ENCODE measurements at regions of chr3 and their contacts with region 1.

Region 1: GRCh38 chr3:187164885-187165543 is 25.7 kb upstream of the RPL39L start:
- DNase-seq: no peak
- H3K4me3 ChIP-seq: no peak overlapping the region
- H3K27ac ChIP-seq: no peak overlapping the region
- H3K27me3 ChIP-seq: peaks cover 20% of the 10 kb centered on the region
- CTCF ChIP-seq: peak; percentile 67

Region 2: GRCh38 chr3:186821429-186822367 is 343.3 kb before region 1 on chr3:
- CTCF ChIA-PET with region 1: interaction called, 15 read pairs
- POLR2A ChIA-PET with region 1: no interaction called
- DNase-seq: no peak
- H3K4me3 ChIP-seq: peak overlapping the region; percentile 47
- H3K27ac ChIP-seq: peak overlapping the region; percentile 87
- H3K27me3 ChIP-seq: no peaks in the 10 kb centered on the region
- CTCF ChIP-seq: peak; percentile 73

Region 3: GRCh38 chr3:186849374-186849975 is 315.5 kb before region 1 on chr3:
- CTCF ChIA-PET with region 1: interaction called, 157 read pairs
- POLR2A ChIA-PET with region 1: no interaction called
- DNase-seq: no peak
- H3K4me3 ChIP-seq: no peak overlapping the region
- H3K27ac ChIP-seq: no peak overlapping the region
- H3K27me3 ChIP-seq: peaks cover 27% of the 10 kb centered on the region
- CTCF ChIP-seq: peak; percentile 51

Region 4: GRCh38 chr3:187112934-187113793 is 51.9 kb before region 1 on chr3:
- CTCF ChIA-PET with region 1: interaction called, 99 read pairs
- POLR2A ChIA-PET with region 1: no interaction called
- DNase-seq: no peak
- H3K4me3 ChIP-seq: no peak overlapping the region
- H3K27ac ChIP-seq: no peak overlapping the region
- H3K27me3 ChIP-seq: no peaks in the 10 kb centered on the region
- CTCF ChIP-seq: peak; percentile 61

Region 5: GRCh38 chr3:187139126-187139894 is 25.7 kb before region 1 on chr3 and contains the start of gene RPL39L:
- CTCF ChIA-PET with region 1: interaction called, 62 read pairs
- POLR2A ChIA-PET with region 1: no interaction called
- DNase-seq: peak; percentile 45
- H3K4me3 ChIP-seq: peak within 1 kb of the TSS; percentile 79
- H3K27ac ChIP-seq: peak within 1 kb of the TSS; percentile 57
- H3K27me3 ChIP-seq: peaks cover 9% of the 10 kb centered on the region
- CTCF ChIP-seq: peak; percentile 96
- polyA plus RNA-seq, gene RPL39L: 14.4 and 17.0 TPM in 2 replicates

Region 6: GRCh38 chr3:187210545-187211327 is 45.7 kb after region 1 on chr3:
- CTCF ChIA-PET with region 1: interaction called, 19 read pairs
- POLR2A ChIA-PET with region 1: no interaction called
- DNase-seq: no peak
- H3K4me3 ChIP-seq: no peak overlapping the region
- H3K27ac ChIP-seq: no peak overlapping the region
- H3K27me3 ChIP-seq: no peaks in the 10 kb centered on the region
- CTCF ChIP-seq: no peak

Region 7: DNA sequence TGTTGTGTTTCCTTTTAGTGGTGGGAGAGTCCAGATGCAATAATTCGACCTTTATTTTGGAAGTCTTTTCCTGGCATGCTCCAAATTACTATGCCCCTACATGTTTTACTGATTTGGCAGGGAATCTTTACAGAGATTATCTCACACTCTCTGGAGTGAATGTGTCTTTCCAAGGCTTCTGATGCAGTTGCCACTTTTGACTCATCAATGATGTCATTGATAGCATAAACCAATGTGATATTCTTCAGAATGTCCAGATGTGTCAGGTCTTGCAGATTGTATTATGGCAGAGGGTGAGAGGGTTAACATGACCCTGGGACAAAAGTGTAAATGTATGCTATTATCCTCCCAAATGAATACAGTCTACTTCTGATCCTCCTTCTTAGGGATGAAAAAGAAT is 212.8 kb after region 1 on chr3:
- CTCF ChIA-PET with region 1: no interaction called
- POLR2A ChIA-PET with region 1: no interaction called
- DNase-seq: no peak
- H3K4me3 ChIP-seq: no peak overlapping the region
- H3K27ac ChIP-seq: no peak overlapping the region
- H3K27me3 ChIP-seq: peaks cover 4% of the 10 kb centered on the region
- CTCF ChIP-seq: no peak

Region 8: GRCh38 chr3:187396661-187397060 is 231.6 kb after region 1 on chr3:
- CTCF ChIA-PET with region 1: no interaction called
- POLR2A ChIA-PET with region 1: no interaction called
- DNase-seq: no peak
- H3K4me3 ChIP-seq: no peak overlapping the region
- H3K27ac ChIP-seq: no peak overlapping the region
- H3K27me3 ChIP-seq: peaks cover 3% of the 10 kb centered on the region
- CTCF ChIP-seq: no peak

Measured in AG04450 (cell line).